Activated CD4-positive, alpha-beta T cell treated with anti-CD3 and anti-CD28 coated beads, Interleukin-2, amount 10 ng/mL, durations not matched to agents 7 days and 5 days (primary cell): ENCODE measurements at regions of chr17 and their contacts with region 1.

Region 1: GRCh38 chr17:74972107-74972972 is at the start of gene HID1:
- DNase-seq: peak; percentile 72
- H3K4me3 Mint-ChIP-seq: peak within 1 kb of the TSS; percentile 62
- H3K27ac Mint-ChIP-seq: no peak within 1 kb of the TSS
- H3K4me1 Mint-ChIP-seq: peaks cover 6% of the 10 kb centered on the region
- H3K27me3 Mint-ChIP-seq: peaks cover 29% of the 10 kb centered on the region
- total RNA-seq, gene HID1: 0.44 to 0.82 TPM

Region 2: GRCh38 chr17:74950207-74950606 is 22.1 kb before region 1 on chr17:
- CTCF ChIA-PET with region 1: no interaction called
- POLR2A ChIA-PET with region 1: no interaction called
- DNase-seq: no peak
- H3K4me3 Mint-ChIP-seq: no peak overlapping the region
- H3K27ac Mint-ChIP-seq: no peak overlapping the region
- H3K4me1 Mint-ChIP-seq: no peaks in the 10 kb centered on the region
- H3K27me3 Mint-ChIP-seq: peaks cover 2% of the 10 kb centered on the region

Region 3: DNA sequence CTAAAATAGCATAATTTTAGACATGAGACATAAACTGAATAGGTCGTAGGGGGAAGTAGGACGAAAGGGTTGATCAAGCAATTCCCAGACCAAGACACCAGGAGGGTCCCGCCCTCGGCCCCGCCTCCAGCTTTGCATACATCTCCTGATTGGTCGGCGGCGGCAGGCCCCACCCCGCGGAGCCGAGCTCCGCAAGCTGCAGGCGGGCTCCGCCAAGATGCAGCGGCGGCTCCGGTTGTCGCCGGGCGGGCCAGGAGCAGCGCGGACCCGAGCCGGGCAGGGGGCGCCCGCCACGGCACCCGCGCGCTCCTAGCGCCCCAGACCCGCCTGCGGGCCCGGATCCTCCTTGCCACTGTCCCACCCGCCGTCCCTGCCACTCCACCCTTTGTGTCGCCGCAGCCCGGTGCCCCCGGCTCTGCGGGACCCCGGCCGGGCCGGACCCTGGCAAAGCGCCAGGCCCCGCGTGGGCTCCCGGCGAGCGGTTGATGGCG is 15.1 kb after region 1 on chr17 and contains the start of gene CDR2L:
- CTCF ChIA-PET with region 1: interaction called, 10 read pairs
- POLR2A ChIA-PET with region 1: no interaction called
- DNase-seq: peak; percentile 92
- H3K4me3 Mint-ChIP-seq: peak within 1 kb of the TSS; percentile 83
- H3K27ac Mint-ChIP-seq: peak within 1 kb of the TSS; percentile 54
- H3K4me1 Mint-ChIP-seq: peaks cover 22% of the 10 kb centered on the region
- H3K27me3 Mint-ChIP-seq: peaks cover 46% of the 10 kb centered on the region
- total RNA-seq, gene CDR2L: 0.31 to 0.40 TPM

Region 4: GRCh38 chr17:75004884-75005283 is 32.5 kb after region 1 on chr17:
- CTCF ChIA-PET with region 1: no interaction called
- POLR2A ChIA-PET with region 1: no interaction called
- DNase-seq: no peak
- H3K4me3 Mint-ChIP-seq: no peak overlapping the region
- H3K27ac Mint-ChIP-seq: no peak overlapping the region
- H3K4me1 Mint-ChIP-seq: no peaks in the 10 kb centered on the region
- H3K27me3 Mint-ChIP-seq: peaks cover 2% of the 10 kb centered on the region